ENCODE measurements at regions of chr6 and their contacts with region 1.

Region 1: GRCh38 chr6:39892490-39893129 is 41.7 kb downstream of the MOCS1 start:
- DNase-seq: peak; percentile 74
- ATAC-seq: peak; percentile 91
- H3K4me3 Mint-ChIP-seq: no peak overlapping the region
- H3K27ac Mint-ChIP-seq: no peak overlapping the region
- H3K4me1 Mint-ChIP-seq: peaks cover 8% of the 10 kb centered on the region
- H3K27me3 Mint-ChIP-seq: no peaks in the 10 kb centered on the region; the same call in 1 of the 2 replicates
- CTCF ChIP-seq: peak; percentile 60

Region 2: DNA sequence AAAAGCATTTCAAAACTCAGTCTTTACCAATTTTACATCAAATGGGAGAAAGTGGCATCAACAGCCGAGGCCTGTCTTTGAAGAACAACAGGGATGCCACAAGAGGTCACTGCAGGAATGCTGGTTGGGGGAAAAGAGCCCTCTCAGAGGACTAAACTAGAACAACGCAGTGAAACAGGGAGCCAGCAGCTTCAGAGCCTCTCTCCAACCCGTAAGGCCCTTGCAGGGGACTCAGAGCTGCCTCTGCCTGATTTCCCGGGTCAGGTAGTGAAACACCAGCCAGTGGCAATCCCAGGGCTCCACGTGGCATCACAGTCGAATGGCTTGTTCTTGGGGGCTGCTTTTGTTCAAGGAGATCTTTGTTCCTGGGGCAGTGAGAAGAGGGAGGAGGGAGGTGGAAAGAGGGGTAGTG is 515.1 kb before region 1 on chr6:
- CTCF ChIA-PET with region 1: interaction called, 20 read pairs
- POLR2A ChIA-PET with region 1: no interaction called
- DNase-seq: peak; percentile 76
- ATAC-seq: peak; percentile 99
- H3K4me3 Mint-ChIP-seq: no peak overlapping the region
- H3K27ac Mint-ChIP-seq: no peak overlapping the region
- H3K4me1 Mint-ChIP-seq: no peaks in the 10 kb centered on the region; the same call in 1 of the 2 replicates
- H3K27me3 Mint-ChIP-seq: no peaks in the 10 kb centered on the region
- CTCF ChIP-seq: peak; percentile 45

Measured in WTC11 (cell line).